CD8-positive, alpha-beta memory T cell (primary cell): ENCODE measurements at regions of chr10 and their contacts with region 1.

Region 1: DNA sequence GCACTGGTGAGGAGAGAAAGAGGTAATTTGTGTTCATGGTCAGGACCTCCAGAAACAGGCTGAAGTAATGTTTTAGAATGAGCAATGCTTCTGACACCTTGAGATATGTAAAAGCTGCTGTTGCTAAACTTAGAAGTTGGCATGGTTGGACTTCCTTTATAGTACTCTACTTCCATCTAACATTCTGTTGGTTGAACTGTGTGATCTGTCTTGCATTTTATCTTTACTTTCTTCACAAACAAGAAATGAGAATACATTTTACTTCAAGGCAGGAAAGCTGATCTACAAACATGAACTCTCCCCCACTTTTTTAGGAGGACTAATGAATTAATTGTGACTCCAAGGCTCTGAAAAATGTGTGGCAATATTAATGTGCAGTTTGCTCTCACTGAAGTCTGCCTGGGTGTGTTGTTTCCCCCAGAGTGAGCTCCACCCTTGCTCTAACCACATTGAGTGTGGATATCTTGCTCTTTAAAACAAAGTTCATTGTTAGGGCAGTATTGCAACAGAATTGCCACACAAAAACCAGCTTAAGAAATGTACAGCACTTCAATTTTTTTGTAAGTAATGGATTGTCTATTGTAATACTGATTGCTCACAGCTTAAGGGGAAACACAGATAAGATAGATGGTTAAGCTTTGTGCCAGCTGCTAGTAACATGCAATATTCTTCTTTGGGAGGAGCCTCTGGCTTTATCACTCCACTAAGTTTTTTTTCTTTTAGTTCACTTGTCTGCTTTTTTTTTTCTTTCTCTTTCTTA is 69.0 kb downstream of the ADD3 start:
- DNase-seq: peak in 3 of 5 donors; percentile 49 to 59 (median 58)
- H3K4me3 ChIP-seq: peak overlapping the region; percentile 45
- H3K4me3 Mint-ChIP-seq: peak overlapping the region; percentile 77 to 87 (median 86)
- H3K27ac ChIP-seq: peak overlapping the region; percentile 47
- H3K27ac Mint-ChIP-seq: peak overlapping the region; percentile 71 to 92 (median 86)
- H3K4me1 ChIP-seq: peaks cover 93% of the 10 kb centered on the region
- H3K4me1 Mint-ChIP-seq: peaks cover 85 to 96% (median 94%) of the 10 kb centered on the region in 3 donors
- H3K27me3 ChIP-seq: no peaks in the 10 kb centered on the region
- H3K27me3 Mint-ChIP-seq: no peaks in the 10 kb centered on the region

Region 2: GRCh38 chr10:110007701-110008517 is 68.8 kb before region 1 on chr10 and contains the start of gene ADD3:
- CTCF ChIA-PET with region 1: interaction called, 9 read pairs
- POLR2A ChIA-PET with region 1: interaction called, 18 read pairs
- DNase-seq: peak; percentile 92 to 98 (median 95)
- H3K4me3 ChIP-seq: peak within 1 kb of the TSS; percentile 91
- H3K4me3 Mint-ChIP-seq: no peak within 1 kb of the TSS
- H3K27ac ChIP-seq: peak within 1 kb of the TSS; percentile 75
- H3K27ac Mint-ChIP-seq: peak within 1 kb of the TSS in 6 of 8 donors; percentile 86 to 99 (median 93)
- H3K4me1 ChIP-seq: peaks cover 31% of the 10 kb centered on the region
- H3K4me1 Mint-ChIP-seq: peaks cover 41 to 42% (median 42%) of the 10 kb centered on the region in 3 donors
- H3K27me3 ChIP-seq: no peaks in the 10 kb centered on the region
- H3K27me3 Mint-ChIP-seq: no peaks in the 10 kb centered on the region
- total RNA-seq, gene ADD3: 39.4 to 50.3 TPM

Region 3: GRCh38 chr10:110225756-110226542 is 149.2 kb after region 1 on chr10:
- CTCF ChIA-PET with region 1: no interaction called
- POLR2A ChIA-PET with region 1: no interaction called
- DNase-seq: peak; percentile 81 to 91 (median 86)
- H3K4me3 ChIP-seq: peak overlapping the region; percentile 63
- H3K4me3 Mint-ChIP-seq: peak overlapping the region; percentile 92 to 98 (median 95)
- H3K27ac ChIP-seq: peak overlapping the region; percentile 49
- H3K27ac Mint-ChIP-seq: peak overlapping the region; percentile 92 to 98 (median 94)
- H3K4me1 ChIP-seq: peaks cover 22% of the 10 kb centered on the region
- H3K4me1 Mint-ChIP-seq: peaks cover 30 to 51% (median 41%) of the 10 kb centered on the region in 3 donors
- H3K27me3 ChIP-seq: no peaks in the 10 kb centered on the region
- H3K27me3 Mint-ChIP-seq: peaks cover 0 to 3% of the 10 kb centered on the region in 2 donors

Region 4: GRCh38 chr10:110368002-110368401 is 291.3 kb after region 1 on chr10:
- CTCF ChIA-PET with region 1: no interaction called
- POLR2A ChIA-PET with region 1: no interaction called
- DNase-seq: no peak
- H3K4me3 ChIP-seq: no peak overlapping the region
- H3K4me3 Mint-ChIP-seq: peak overlapping the region in 1 of 7 donors; percentile 37
- H3K27ac ChIP-seq: no peak overlapping the region
- H3K27ac Mint-ChIP-seq: peak overlapping the region in 1 of 8 donors; percentile 83
- H3K4me1 ChIP-seq: no peaks in the 10 kb centered on the region
- H3K4me1 Mint-ChIP-seq: peaks cover 0 to 8% (median 7%) of the 10 kb centered on the region in 3 donors
- H3K27me3 ChIP-seq: no peaks in the 10 kb centered on the region
- H3K27me3 Mint-ChIP-seq: peaks cover 0 to 6% of the 10 kb centered on the region in 2 donors